ENCODE measurements at regions of chr6 and their contacts with region 1.

Region 1: DNA sequence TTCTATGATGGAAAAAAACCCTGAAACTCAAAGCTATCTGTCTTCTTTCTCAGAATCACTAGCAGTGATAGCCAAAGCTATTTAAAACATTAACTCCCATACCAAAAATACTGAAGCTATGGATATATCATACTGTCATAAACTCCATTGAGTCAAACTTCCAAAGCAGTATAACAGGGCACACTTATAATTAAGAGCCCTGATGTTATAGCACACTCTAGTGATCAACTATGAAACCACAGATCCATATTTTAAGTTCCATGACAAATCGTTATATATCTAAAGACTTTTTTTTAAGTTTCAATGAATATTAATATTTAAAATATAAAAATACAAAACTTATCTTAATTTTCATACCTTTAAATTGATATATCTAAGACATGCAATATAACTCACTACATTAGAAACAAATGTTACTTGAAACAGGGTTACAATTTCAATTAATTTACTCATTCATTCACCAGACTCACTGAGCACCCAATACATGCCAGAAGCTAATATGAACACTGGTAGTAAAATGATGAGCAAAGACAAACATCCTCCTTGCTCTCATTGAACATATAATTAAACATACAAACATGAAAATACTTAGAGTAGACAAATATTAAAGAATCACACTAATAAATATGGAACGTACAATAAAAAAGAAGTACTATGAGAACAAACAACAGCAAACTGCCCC is 69.3 kb downstream of the IBTK start:
- DNase-seq: no peak

Region 2: GRCh38 chr6:82076916-82077315 is 101.3 kb before region 1 on chr6:
- intact Hi-C with region 1: loop called (anchors 5 kb)
- DNase-seq: no peak

Region 3: GRCh38 chr6:82095091-82095490 is 83.1 kb before region 1 on chr6:
- intact Hi-C with region 1: no loop called
- DNase-seq: no peak

Region 4: GRCh38 chr6:82251942-82252341 is 73.7 kb after region 1 on chr6:
- intact Hi-C with region 1: no loop called
- DNase-seq: no peak